CD4-positive, alpha-beta T cell (primary cell): ENCODE measurements at regions of chr12 and their contacts with region 1.

Region 1: GRCh38 chr12:121399391-121400331 is at the start of gene RNF34:
- DNase-seq: peak; percentile 95 to 99 (median 98)
- ATAC-seq: peak; percentile 86
- H3K4me3 ChIP-seq: peak within 1 kb of the TSS; percentile 91
- H3K4me3 Mint-ChIP-seq: peak within 1 kb of the TSS; percentile 83
- H3K27ac ChIP-seq: peak within 1 kb of the TSS; percentile 91 to 93
- H3K27ac Mint-ChIP-seq: peak within 1 kb of the TSS; percentile 93
- H3K4me1 ChIP-seq: peaks cover 24% of the 10 kb centered on the region
- H3K4me1 Mint-ChIP-seq: peaks cover 47% of the 10 kb centered on the region
- H3K27me3 ChIP-seq: no peaks in the 10 kb centered on the region
- H3K27me3 Mint-ChIP-seq: no peaks in the 10 kb centered on the region
- CTCF ChIP-seq: no peak
- total RNA-seq, gene RNF34: 60.6 to 63.1 TPM

Region 2: GRCh38 chr12:121417847-121418246 is 18.2 kb after region 1 on chr12:
- CTCF ChIA-PET with region 1: interaction called, 5 read pairs
- POLR2A ChIA-PET with region 1: interaction called, 11 read pairs
- intact Hi-C with region 1: no loop called
- DNase-seq: no peak
- ATAC-seq: no peak
- H3K4me3 ChIP-seq: no peak overlapping the region
- H3K4me3 Mint-ChIP-seq: no peak overlapping the region
- H3K27ac ChIP-seq: no peak overlapping the region
- H3K27ac Mint-ChIP-seq: peak overlapping the region; percentile 74
- H3K4me1 ChIP-seq: no peaks in the 10 kb centered on the region
- H3K4me1 Mint-ChIP-seq: peaks cover 31% of the 10 kb centered on the region
- H3K27me3 ChIP-seq: no peaks in the 10 kb centered on the region
- H3K27me3 Mint-ChIP-seq: no peaks in the 10 kb centered on the region
- CTCF ChIP-seq: no peak

Region 3: DNA sequence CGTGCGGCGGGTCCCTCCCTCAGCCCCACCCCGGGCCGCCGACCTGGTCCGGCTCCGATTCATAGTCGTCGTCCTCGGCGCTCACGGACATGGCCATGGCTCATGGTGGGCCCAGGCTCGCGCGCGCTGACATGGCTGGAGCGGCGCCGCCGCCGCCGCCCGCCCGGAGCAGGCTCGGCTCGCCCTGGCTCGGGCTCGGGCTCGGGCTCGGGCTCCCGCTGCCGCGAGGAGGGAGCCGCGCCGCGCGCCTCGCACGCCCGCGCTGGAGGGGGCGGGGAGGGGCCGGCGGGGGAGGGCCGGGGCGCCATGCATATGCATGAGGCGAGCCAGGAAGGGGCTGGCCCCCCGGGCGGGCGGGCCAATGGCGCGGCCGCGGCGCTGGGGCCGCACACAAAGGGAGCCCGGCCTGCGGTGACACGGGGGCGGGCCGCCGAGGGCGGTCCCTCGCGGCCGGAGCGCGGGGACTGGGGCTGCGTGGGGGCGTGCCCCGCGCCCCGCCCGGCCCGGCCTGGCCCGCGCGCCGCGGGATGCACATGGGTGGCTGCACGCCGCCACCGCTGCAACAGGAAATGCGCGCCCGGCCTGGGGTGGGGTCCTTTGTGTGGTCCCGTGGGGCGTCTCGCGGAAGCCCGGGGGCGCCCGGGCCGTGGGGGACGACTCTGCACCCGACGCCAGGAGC is 67.6 kb after region 1 on chr12:
- CTCF ChIA-PET with region 1: interaction called, 5 read pairs
- POLR2A ChIA-PET with region 1: interaction called, 6 read pairs
- intact Hi-C with region 1: loop called in 1 of 2 experiments (anchors 1 kb)
- DNase-seq: peak; percentile 73 to 95 (median 88)
- ATAC-seq: peak; percentile 87
- H3K4me3 ChIP-seq: peak overlapping the region; percentile 49
- H3K4me3 Mint-ChIP-seq: no peak overlapping the region
- H3K27ac ChIP-seq: peak overlapping the region in 1 of 2 donors; percentile 43
- H3K27ac Mint-ChIP-seq: no peak overlapping the region
- H3K4me1 ChIP-seq: peaks cover 35% of the 10 kb centered on the region
- H3K4me1 Mint-ChIP-seq: peaks cover 39% of the 10 kb centered on the region
- H3K27me3 ChIP-seq: no peaks in the 10 kb centered on the region
- H3K27me3 Mint-ChIP-seq: no peaks in the 10 kb centered on the region
- CTCF ChIP-seq: no peak

Region 4: GRCh38 chr12:121678716-121679580 is 279.3 kb after region 1 on chr12:
- CTCF ChIA-PET with region 1: no interaction called
- POLR2A ChIA-PET with region 1: no interaction called
- intact Hi-C with region 1: no loop called
- DNase-seq: no peak
- ATAC-seq: no peak
- H3K4me3 ChIP-seq: no peak overlapping the region
- H3K4me3 Mint-ChIP-seq: peak overlapping the region; percentile 63
- H3K27ac ChIP-seq: no peak overlapping the region
- H3K27ac Mint-ChIP-seq: peak overlapping the region; percentile 83
- H3K4me1 ChIP-seq: peaks cover 11% of the 10 kb centered on the region
- H3K4me1 Mint-ChIP-seq: peaks cover 5% of the 10 kb centered on the region
- H3K27me3 ChIP-seq: no peaks in the 10 kb centered on the region
- H3K27me3 Mint-ChIP-seq: no peaks in the 10 kb centered on the region
- CTCF ChIP-seq: no peak